Prostate gland (tissue), 2 donors: ENCODE measurements at regions of chr17 and their contacts with region 1.

Region 1: GRCh38 chr17:64326395-64327054 is 63.5 kb upstream of the TEX2 start:
- DNase-seq: peak; percentile 16
- H3K4me3 ChIP-seq: no peak overlapping the region
- H3K27ac ChIP-seq: peak overlapping the region; percentile 58 to 64
- H3K4me1 ChIP-seq: no peaks in the 10 kb centered on the region
- H3K27me3 ChIP-seq: no peaks in the 10 kb centered on the region
- CTCF ChIP-seq: no peak
- POLR2A ChIP-seq: no peak

Region 2: DNA sequence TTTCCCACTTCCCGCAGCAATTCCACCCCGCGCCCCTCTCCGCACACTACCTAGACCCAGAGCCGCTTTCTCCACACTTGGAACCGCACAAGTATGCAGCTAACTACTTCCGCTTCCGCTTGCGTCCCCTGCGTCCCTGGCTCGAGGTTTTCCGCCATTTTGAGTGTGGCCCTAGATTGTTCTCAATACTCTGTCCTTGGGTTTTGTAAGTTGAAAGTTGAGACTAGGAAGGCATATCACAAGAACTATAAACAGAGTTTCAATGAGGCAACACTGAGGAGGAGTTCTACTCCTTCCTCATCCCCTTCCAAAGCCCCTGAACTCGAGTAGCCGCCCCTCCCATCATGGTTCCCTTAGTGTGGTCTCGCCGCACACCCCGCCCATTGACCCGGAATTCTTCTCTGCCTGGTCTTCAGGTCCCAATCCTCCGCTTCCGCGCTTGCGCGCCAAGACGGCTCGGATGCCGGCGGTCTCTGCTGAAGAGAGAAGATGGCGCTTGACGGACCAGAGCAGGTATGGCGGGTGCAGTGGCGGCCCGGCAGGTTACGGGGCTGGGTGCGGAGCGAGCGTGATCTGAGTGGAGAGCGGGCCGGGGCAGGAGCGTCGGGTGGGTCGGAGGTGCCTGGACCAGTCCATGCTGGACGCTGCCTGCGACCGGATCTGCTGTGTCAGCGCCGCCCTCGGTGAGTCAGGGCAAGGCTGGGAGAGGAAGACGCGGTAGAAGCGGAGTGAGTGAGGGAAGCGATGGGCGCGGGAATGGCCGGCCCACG is 499.3 kb before region 1 on chr17 and contains the starts of genes FTSJ3 and PSMC5:
- intact Hi-C with region 1: no loop called
- DNase-seq: peak; percentile 95
- H3K4me3 ChIP-seq: peak within 1 kb of the TSS; percentile 60 to 73
- H3K27ac ChIP-seq: peak within 1 kb of the TSS; percentile 89 to 90
- H3K4me1 ChIP-seq: peaks cover 5% of the 10 kb centered on the region
- H3K27me3 ChIP-seq: no peaks in the 10 kb centered on the region
- CTCF ChIP-seq: peak in 3 of 4 experiments; percentile 27 to 62 (median 55)
- POLR2A ChIP-seq: peak; percentile 62
- total RNA-seq, gene FTSJ3: 29.4 to 46.6 TPM
- total RNA-seq, gene PSMC5: 94.0 to 109 TPM

Region 3: DNA sequence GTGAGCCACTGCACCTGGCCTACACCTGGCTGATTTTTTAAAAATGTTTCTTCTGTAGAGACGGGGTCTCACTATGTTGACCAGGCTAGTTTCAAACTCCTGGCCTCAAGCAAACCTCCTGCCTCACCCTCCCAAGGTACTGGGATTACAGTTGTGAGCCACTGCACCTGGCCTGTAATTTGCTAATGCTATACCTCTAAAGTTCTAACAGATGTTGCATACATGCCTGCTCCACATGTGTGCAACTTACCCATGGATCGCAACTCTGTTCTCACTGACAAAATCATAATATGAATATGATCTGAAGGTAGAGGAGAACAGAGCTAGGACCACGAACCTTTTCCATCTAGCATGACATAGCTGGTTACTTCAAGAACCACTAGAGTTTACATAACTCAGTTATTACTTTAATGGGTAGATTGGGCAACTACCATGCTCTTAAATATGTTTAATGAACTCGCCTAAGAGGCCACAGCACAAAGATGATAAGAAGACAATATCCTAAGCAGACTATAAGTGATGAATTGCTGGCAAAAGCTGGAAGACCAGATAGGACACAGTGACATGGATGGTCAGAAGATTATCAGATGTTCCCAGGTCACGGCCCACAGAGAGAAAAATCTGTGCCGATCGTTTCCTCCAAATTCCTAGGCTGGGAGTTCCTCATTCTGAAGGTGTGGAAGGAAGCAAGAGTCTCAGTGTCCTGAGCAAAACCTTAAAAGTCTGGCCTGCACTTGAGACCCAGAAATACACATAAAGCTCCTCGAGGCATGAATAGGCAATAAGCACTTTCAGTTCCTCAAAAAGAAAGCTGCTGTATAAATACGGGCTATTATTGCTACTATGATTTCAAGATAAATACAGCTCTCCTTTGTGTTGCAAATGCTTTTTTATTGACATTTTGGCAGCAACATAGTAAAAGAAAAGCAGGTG is 252.5 kb before region 1 on chr17:
- intact Hi-C with region 1: no loop called
- DNase-seq: no peak
- H3K4me3 ChIP-seq: no peak overlapping the region
- H3K27ac ChIP-seq: peak overlapping the region; percentile 51 to 57
- H3K4me1 ChIP-seq: peaks cover 3% of the 10 kb centered on the region
- H3K27me3 ChIP-seq: no peaks in the 10 kb centered on the region
- CTCF ChIP-seq: no peak
- POLR2A ChIP-seq: no peak

Region 4: DNA sequence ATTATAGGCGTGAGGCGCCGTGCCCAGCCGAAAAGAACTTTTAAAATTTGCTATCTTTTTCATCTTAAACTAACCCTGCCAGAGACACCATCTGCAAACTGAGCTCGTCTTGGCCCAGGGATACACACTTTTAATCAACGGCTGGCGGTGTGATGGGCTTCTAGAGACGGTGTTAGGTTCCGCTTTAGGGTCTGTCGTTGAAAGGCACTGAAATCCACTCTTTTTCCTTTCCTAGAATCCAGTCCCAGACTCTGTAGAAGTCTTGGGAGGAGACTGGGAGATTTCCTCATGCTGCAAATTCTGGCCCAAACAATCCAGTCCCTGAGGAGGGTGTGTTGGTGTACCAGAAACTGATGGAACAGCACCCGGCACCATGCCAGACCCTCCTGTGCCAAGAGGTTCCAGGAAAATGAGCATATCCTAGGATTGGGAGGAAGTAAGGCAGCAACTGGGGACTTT is 11.5 kb before region 1 on chr17:
- intact Hi-C with region 1: loop called (anchors 1 kb)
- DNase-seq: peak; percentile 67
- H3K4me3 ChIP-seq: no peak overlapping the region
- H3K27ac ChIP-seq: peak overlapping the region; percentile 47 to 50
- H3K4me1 ChIP-seq: no peaks in the 10 kb centered on the region
- H3K27me3 ChIP-seq: no peaks in the 10 kb centered on the region
- CTCF ChIP-seq: no peak
- POLR2A ChIP-seq: no peak

Region 5: GRCh38 chr17:64357191-64357981 is 30.9 kb after region 1 on chr17:
- intact Hi-C with region 1: loop called (anchors 2 kb)
- DNase-seq: no peak
- H3K4me3 ChIP-seq: no peak overlapping the region
- H3K27ac ChIP-seq: no peak overlapping the region
- H3K4me1 ChIP-seq: no peaks in the 10 kb centered on the region
- H3K27me3 ChIP-seq: no peaks in the 10 kb centered on the region
- CTCF ChIP-seq: no peak
- POLR2A ChIP-seq: no peak